ENCODE measurements at regions of chr22 and their contacts with region 1.

Region 1: DNA sequence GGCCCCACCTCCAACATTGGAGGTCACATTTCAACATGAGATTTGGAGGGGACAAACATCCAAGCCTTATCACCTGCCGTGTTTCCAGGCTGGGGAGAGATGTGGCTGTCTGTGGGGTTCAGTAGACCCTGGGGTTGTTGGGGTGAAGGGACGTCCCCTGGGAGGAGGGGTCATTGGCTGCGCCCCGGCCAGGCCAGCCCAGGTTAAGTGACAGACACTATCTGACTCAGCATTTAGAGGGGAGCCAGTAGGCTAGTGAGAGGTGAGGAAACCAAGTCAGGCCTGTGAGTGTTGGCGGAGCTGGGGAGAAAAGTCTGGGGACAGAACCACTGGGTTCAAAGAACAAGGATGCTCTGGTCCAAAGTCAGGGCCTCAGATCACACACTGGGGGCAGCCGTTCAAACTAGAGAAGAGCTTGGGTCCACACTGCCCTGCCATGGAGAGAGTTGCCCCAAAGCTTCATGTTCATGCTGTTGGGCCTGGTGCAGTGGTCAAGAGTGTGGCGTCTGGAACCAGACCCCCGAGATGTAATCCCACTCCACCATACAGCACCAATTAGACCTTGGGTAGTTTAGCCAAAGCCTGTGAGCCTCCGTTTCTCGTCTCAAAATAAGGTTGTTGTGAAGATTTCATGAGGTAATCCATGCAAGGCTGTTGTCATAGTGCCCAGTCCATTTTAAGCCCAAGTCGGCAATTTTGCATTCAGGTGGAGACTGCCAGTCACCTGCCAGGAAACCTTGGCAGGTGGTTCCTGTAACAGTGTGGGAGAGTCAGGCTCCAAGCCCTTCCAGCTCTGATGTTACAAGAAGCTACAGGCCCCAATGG is 1289.6 kb downstream of the TBC1D22A start:
- DNase-seq: no peak
- H3K4me3 ChIP-seq: no peak overlapping the region
- H3K27ac ChIP-seq: no peak overlapping the region
- H3K4me1 ChIP-seq: no peaks in the 10 kb centered on the region
- H3K27me3 ChIP-seq: no peaks in the 10 kb centered on the region
- CTCF ChIP-seq: no peak
- EP300 ChIP-seq: no peak
- POLR2A ChIP-seq: no peak

Region 2: DNA sequence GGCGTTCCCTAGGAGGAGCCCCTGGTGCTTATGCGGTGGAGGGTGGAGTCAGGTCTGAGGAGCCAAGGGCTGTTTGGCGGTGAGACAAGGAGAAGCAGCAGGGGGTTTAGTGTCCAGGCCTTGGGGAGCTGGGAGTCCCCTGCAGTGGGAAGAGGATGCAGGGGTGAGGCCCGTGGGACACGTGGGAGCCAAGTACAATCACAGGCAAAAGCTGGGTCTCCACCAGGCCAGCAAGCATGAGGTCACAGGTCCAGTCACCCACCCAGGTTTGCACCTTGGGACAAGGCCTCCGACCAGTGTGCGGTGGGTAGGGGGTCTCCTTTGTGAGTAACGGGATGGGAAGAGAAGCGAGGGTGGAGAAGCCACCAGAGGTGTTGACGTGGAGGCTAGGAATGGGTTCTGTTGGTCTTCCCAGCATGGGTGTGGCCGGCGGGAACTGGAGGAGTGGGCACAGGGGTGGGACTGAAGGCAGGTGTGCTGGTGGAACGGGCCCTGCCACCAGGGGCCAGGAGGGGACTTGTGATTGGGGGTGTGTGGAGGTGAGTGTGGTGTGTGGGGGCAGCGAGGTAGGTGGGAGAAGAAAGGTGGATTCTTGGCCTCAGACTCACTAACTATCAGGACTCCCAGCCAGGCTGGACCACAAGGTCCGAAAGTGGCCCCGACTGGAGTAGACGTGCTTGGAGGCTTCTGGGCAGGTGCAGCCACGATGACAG is 336.0 kb before region 1 on chr22:
- intact Hi-C with region 1: no loop called
- DNase-seq: no peak
- H3K4me3 ChIP-seq: no peak overlapping the region
- H3K27ac ChIP-seq: no peak overlapping the region
- H3K4me1 ChIP-seq: no peaks in the 10 kb centered on the region
- H3K27me3 ChIP-seq: no peaks in the 10 kb centered on the region
- CTCF ChIP-seq: no peak
- EP300 ChIP-seq: no peak
- POLR2A ChIP-seq: no peak

Region 3: DNA sequence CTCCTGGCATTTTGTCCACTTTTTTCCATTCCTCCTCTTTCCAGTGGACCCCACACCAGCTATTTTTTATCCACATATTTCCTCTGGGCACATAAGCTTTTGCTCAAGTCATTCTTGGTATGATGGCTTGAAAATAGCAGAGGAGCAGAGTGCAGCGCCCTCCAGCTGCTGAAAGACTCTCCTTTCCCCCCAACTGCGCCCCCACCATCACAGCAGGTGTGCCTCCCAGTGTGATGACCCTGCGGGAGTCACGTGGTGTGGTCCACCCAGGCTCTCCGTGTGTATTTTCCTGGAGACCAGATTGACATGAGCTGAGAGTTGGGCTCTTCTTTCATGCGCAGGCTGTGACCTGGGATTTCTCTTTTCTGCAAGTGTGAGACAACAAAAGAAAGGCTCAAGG is 48.0 kb before region 1 on chr22:
- intact Hi-C with region 1: loop called in 1 of 4 experiments (anchors 5 kb)
- DNase-seq: no peak
- H3K4me3 ChIP-seq: no peak overlapping the region
- H3K27ac ChIP-seq: no peak overlapping the region
- H3K4me1 ChIP-seq: no peaks in the 10 kb centered on the region
- H3K27me3 ChIP-seq: no peaks in the 10 kb centered on the region
- CTCF ChIP-seq: no peak
- EP300 ChIP-seq: no peak
- POLR2A ChIP-seq: no peak

Region 4: DNA sequence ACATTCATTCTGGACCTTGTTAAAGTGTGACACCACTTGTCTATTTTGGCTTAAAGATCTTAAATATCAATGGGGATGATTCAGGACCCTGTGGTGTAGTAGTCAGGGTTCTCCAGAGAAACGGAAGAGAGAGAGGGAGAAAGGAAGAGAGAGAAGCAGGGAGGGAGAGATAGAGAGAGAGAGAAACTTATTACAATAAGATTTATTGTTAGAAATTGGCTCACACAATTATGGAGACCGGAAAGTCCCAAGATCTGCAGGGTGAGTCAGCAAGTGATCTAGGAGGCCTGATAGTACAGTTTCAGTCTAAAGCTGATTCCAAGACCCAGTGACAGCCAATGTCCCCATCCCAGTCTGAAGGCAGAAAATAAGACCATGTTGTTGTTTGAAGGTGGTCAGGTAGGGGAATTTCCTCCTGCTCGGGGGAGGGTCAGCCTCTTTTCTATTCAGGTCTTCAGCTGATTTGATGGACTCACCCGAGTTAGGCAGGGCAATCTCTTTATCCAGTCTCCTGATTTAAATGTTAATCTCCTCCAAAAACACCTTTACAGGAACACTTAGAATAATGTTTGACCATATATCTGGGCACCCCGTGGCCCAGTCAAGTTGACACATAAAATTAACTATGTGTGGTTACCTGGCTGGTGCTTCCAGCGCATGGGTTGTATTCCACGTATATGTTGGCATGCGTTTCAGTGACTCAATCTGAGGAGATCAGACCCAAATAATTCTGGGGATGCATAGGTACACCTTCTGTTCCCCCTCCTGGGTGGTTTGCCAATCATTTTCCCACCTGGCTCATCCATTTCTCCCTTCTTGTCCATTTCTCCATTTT is 60.9 kb after region 1 on chr22:
- intact Hi-C with region 1: no loop called
- DNase-seq: no peak
- H3K4me3 ChIP-seq: no peak overlapping the region
- H3K27ac ChIP-seq: no peak overlapping the region
- H3K4me1 ChIP-seq: no peaks in the 10 kb centered on the region
- H3K27me3 ChIP-seq: no peaks in the 10 kb centered on the region
- CTCF ChIP-seq: no peak
- EP300 ChIP-seq: no peak
- POLR2A ChIP-seq: no peak